ENCODE measurements at regions of chr19 and their contacts with region 1.

Region 1: DNA sequence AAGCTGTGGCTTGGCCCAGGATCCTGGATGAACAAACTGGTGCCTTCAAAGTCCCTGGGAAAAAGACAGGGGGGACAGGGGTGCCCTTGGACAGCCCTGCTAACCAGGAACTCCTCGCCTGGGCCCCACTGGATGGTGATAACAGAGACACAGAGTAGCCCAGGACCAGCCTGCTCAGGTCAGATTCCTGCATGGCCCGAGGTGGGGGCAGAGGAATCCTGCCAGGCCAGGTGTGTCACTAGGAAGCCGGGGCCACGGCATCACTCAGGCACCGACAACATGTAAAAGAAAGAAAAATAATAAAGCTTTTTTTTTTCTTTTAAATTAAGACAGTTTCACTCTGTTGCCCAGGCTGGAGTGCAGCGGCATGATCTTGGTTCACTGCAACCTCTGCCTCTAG is 5.6 kb upstream of the RPL18A start:
- DNase-seq: no peak
- H3K4me3 ChIP-seq: no peak overlapping the region
- H3K27ac ChIP-seq: no peak overlapping the region
- H3K4me1 ChIP-seq: no peaks in the 10 kb centered on the region
- H3K27me3 ChIP-seq: no peaks in the 10 kb centered on the region
- CTCF ChIP-seq: no peak
- EP300 ChIP-seq: no peak
- POLR2A ChIP-seq: no peak

Region 2: DNA sequence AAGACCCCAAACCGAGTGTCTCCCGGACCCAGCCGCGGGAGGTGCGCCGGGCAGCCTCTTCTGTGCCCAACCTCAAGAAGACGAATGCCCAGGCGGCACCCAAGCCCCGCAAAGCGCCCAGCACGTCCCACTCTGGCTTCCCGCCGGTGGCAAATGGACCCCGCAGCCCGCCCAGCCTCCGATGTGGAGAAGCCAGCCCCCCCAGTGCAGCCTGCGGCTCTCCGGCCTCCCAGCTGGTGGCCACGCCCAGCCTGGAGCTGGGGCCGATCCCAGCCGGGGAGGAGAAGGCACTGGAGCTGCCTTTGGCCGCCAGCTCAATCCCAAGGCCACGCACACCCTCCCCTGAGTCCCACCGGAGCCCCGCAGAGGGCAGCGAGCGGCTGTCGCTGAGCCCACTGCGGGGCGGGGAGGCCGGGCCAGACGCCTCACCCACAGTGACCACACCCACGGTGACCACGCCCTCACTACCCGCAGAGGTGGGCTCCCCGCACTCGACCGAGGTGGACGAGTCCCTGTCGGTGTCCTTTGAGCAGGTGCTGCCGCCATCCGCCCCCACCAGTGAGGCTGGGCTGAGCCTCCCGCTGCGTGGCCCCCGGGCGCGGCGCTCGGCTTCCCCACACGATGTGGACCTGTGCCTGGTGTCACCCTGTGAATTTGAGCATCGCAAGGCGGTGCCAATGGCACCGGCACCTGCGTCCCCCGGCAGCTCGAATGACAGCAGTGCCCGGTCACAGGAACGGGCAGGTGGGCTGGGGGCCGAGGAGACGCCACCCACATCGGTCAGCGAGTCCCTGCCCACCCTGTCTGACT is 126.9 kb before region 1 on chr19:
- intact Hi-C with region 1: no loop called
- DNase-seq: peak in 3 of 5 donors; percentile 44 to 62 (median 48)
- H3K4me3 ChIP-seq: no peak overlapping the region
- H3K27ac ChIP-seq: peak overlapping the region in 1 of 2 donors; percentile 20
- H3K4me1 ChIP-seq: peaks cover 3% of the 10 kb centered on the region
- H3K27me3 ChIP-seq: no peaks in the 10 kb centered on the region
- CTCF ChIP-seq: no peak
- EP300 ChIP-seq: no peak
- POLR2A ChIP-seq: no peak

Region 3: GRCh38 chr19:17784201-17785008 is 69.7 kb before region 1 on chr19:
- intact Hi-C with region 1: loop called in 1 of 4 experiments (anchors 5 kb)
- DNase-seq: peak; percentile 63 to 80 (median 75)
- H3K4me3 ChIP-seq: no peak overlapping the region
- H3K27ac ChIP-seq: no peak overlapping the region
- H3K4me1 ChIP-seq: peaks cover 6% of the 10 kb centered on the region
- H3K27me3 ChIP-seq: no peaks in the 10 kb centered on the region
- CTCF ChIP-seq: peak; percentile 64 to 79 (median 76)
- EP300 ChIP-seq: no peak
- POLR2A ChIP-seq: no peak

Region 4: GRCh38 chr19:17821190-17821589 is 32.9 kb before region 1 on chr19 and contains the start of gene INSL3:
- intact Hi-C with region 1: no loop called
- DNase-seq: peak in 1 of 5 donors; percentile 14
- H3K4me3 ChIP-seq: no peak within 1 kb of the TSS
- H3K27ac ChIP-seq: no peak within 1 kb of the TSS
- H3K4me1 ChIP-seq: peaks cover 7% of the 10 kb centered on the region
- H3K27me3 ChIP-seq: no peaks in the 10 kb centered on the region
- CTCF ChIP-seq: no peak
- EP300 ChIP-seq: no peak
- POLR2A ChIP-seq: no peak
- total RNA-seq, gene INSL3: 0.38 to 4.9 (median 1.4) TPM in 6 of 7 donors, not detected in the other

Region 5: GRCh38 chr19:17889609-17890214 is 35.7 kb after region 1 on chr19:
- intact Hi-C with region 1: no loop called
- DNase-seq: peak in 2 of 5 donors; percentile 43 to 71
- H3K4me3 ChIP-seq: no peak overlapping the region
- H3K27ac ChIP-seq: no peak overlapping the region
- H3K4me1 ChIP-seq: no peaks in the 10 kb centered on the region
- H3K27me3 ChIP-seq: no peaks in the 10 kb centered on the region
- CTCF ChIP-seq: no peak
- EP300 ChIP-seq: no peak
- POLR2A ChIP-seq: no peak

Measured in ovary (tissue), 10 donors.